ENCODE measurements at regions of chr5 and their contacts with region 1.

Region 1: DNA sequence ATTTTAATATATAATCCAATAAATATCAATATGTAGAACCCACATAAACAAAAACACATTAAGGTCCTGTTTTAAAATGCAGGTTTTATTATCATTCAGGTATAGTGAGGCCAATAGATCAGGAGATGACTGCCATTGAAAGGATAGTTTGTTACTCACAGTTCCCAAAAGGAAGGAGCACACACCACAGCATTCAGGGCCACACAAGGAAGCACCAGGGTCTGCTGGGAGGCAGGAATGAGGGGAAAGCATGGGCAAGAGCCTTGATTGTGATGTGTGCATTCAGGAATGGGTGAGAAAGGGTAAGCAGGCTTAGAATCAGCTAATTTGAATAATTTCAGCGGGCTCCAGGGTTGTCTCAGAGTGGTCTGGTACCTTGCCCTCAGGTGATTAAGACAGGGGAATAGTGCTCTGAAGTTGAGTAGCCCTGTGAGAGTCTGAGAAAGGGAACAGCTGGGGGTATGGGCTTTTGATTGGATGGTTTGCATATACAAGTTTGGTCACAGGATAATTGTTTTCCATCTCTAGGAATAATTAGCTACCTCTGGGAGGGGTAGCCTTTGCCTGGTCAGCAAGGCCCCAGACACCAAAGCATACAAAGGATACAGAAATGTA is 19.8 kb upstream of the OTULIN start:
- DNase-seq: no peak
- ATAC-seq: no peak
- H3K4me3 ChIP-seq: no peak overlapping the region
- H3K27ac ChIP-seq: no peak overlapping the region
- H3K4me1 ChIP-seq: no peaks in the 10 kb centered on the region
- H3K27me3 ChIP-seq: peaks cover 2 to 8% (median 3%) of the 10 kb centered on the region in 3 donors
- CTCF ChIP-seq: no peak

Region 2: GRCh38 chr5:14357851-14358250 is 286.9 kb before region 1 on chr5:
- intact Hi-C with region 1: loop called (anchors 5 to 10 kb)
- DNase-seq: no peak
- ATAC-seq: no peak
- H3K4me3 ChIP-seq: no peak overlapping the region
- H3K27ac ChIP-seq: no peak overlapping the region
- H3K4me1 ChIP-seq: peaks cover 9% of the 10 kb centered on the region
- H3K27me3 ChIP-seq: no peaks in the 10 kb centered on the region
- CTCF ChIP-seq: no peak

Region 3: DNA sequence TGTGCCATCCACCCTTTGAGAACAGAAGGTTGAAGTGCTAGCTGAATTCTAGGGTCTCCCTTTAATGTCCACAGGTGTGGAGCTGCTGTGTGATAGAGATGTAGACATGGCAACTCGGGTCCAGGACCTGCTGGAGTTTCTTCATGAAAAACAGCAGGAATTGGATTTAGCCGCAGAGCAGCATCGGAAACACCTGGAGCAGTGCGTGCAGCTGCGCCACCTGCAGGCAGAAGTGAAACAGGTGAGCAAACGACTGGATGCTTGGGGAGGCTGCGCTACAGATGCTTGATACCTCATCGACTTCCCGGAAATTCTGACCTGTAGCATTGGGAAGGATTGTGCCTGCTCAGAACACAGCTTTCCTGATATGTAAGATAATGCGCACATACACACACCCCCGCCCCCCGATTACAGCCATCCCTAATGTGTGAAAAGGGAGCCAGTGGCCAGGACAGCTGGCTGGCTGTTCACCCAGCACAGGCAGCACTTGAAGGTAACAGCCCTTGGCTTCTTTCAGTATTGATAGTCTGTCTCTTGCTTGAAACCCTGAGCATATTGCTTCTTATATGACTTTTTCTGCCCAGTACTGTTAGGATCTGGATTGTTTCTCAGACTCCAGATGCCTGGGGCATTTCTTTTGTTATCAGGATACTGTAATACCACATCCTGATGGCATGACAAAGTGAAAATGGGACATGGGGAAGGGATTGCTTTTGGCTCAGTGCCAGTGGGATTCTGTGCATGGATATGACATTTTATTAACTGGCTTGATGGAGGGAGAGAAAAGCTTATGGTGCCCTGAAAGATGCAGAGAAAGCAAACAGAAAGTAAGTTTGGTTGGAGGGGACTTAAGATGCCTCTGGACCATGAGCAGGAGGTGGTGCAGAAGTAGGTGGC is 279.9 kb before region 1 on chr5:
- intact Hi-C with region 1: loop called in 1 of 2 experiments (anchors 10 kb)
- DNase-seq: no peak
- ATAC-seq: peak in 1 of 4 donors; percentile 50
- H3K4me3 ChIP-seq: no peak overlapping the region
- H3K27ac ChIP-seq: no peak overlapping the region
- H3K4me1 ChIP-seq: no peaks in the 10 kb centered on the region
- H3K27me3 ChIP-seq: no peaks in the 10 kb centered on the region
- CTCF ChIP-seq: peak; percentile 45

Region 4: GRCh38 chr5:14399054-14399692 is 245.6 kb before region 1 on chr5:
- intact Hi-C with region 1: loop called (anchors 2 to 5 kb)
- DNase-seq: no peak
- ATAC-seq: peak in 3 of 4 donors; percentile 57 to 80 (median 61)
- H3K4me3 ChIP-seq: no peak overlapping the region
- H3K27ac ChIP-seq: no peak overlapping the region
- H3K4me1 ChIP-seq: no peaks in the 10 kb centered on the region
- H3K27me3 ChIP-seq: no peaks in the 10 kb centered on the region
- CTCF ChIP-seq: peak; percentile 66

Region 5: GRCh38 chr5:14428302-14429081 is 216.2 kb before region 1 on chr5:
- intact Hi-C with region 1: no loop called
- DNase-seq: no peak
- ATAC-seq: peak; percentile 57 to 74 (median 72)
- H3K4me3 ChIP-seq: no peak overlapping the region
- H3K27ac ChIP-seq: no peak overlapping the region
- H3K4me1 ChIP-seq: peaks cover 23% of the 10 kb centered on the region
- H3K27me3 ChIP-seq: no peaks in the 10 kb centered on the region
- CTCF ChIP-seq: no peak